ENCODE measurements at regions of chr7 and their contacts with region 1.

Region 1: DNA sequence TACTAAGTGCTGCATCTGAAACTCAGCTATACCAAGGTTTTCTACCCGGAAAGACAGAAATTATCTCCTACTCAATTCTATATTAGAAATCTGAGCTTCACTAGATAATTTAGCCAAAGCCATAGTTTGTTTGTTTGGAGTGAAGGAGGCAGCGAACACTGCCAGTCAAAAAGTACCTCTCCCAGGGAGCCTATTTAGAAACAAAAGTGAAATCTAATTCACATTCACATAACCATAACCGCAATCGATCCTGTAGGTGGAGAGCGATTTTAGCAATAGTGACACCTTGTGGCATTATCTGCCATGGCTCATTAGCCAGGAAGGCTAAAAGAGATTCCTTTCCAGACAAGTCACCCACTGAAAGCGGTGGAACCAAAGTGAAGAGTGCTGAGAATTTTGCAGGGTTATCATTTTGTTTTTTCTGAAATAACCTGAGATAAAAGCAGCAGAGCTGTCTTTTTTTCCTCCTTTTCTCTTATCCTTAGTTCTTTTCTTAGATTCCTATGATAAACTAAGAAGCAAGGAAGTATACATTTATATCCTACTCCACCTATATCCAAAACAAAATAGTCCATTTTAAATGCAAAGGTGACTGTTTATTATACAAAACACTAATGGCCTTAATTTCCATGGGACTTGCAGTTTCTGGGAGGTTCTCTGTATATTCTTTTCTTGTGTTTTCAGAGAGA is 83.7 kb upstream of the BET1 start:
- DNase-seq: peak; percentile 63
- H3K4me3 Mint-ChIP-seq: peak overlapping the region; percentile 33
- H3K27ac Mint-ChIP-seq: no peak overlapping the region
- H3K4me1 Mint-ChIP-seq: peaks cover 6% of the 10 kb centered on the region
- H3K27me3 Mint-ChIP-seq: peaks cover 18% of the 10 kb centered on the region

Region 2: GRCh38 chr7:93245525-93246432 is 842.0 kb before region 1 on chr7:
- CTCF ChIA-PET with region 1: interaction called, 5 read pairs
- POLR2A ChIA-PET with region 1: no interaction called
- intact Hi-C with region 1: loop called (anchors 1 kb)
- DNase-seq: no peak
- H3K4me3 Mint-ChIP-seq: no peak overlapping the region
- H3K27ac Mint-ChIP-seq: no peak overlapping the region
- H3K4me1 Mint-ChIP-seq: peaks cover 12% of the 10 kb centered on the region
- H3K27me3 Mint-ChIP-seq: no peaks in the 10 kb centered on the region

Region 3: GRCh38 chr7:93442478-93443224 is 645.2 kb before region 1 on chr7:
- CTCF ChIA-PET with region 1: interaction called, 3 read pairs
- POLR2A ChIA-PET with region 1: no interaction called
- intact Hi-C with region 1: loop called (anchors 5 kb)
- DNase-seq: peak; percentile 42
- H3K4me3 Mint-ChIP-seq: no peak overlapping the region
- H3K27ac Mint-ChIP-seq: no peak overlapping the region
- H3K4me1 Mint-ChIP-seq: no peaks in the 10 kb centered on the region
- H3K27me3 Mint-ChIP-seq: no peaks in the 10 kb centered on the region

Region 4: GRCh38 chr7:93715234-93715633 is 372.6 kb before region 1 on chr7:
- CTCF ChIA-PET with region 1: no interaction called
- POLR2A ChIA-PET with region 1: no interaction called
- intact Hi-C with region 1: loop called (anchors 1 kb)
- DNase-seq: peak; percentile 35
- H3K4me3 Mint-ChIP-seq: no peak overlapping the region
- H3K27ac Mint-ChIP-seq: no peak overlapping the region
- H3K4me1 Mint-ChIP-seq: no peaks in the 10 kb centered on the region
- H3K27me3 Mint-ChIP-seq: no peaks in the 10 kb centered on the region

Region 5: DNA sequence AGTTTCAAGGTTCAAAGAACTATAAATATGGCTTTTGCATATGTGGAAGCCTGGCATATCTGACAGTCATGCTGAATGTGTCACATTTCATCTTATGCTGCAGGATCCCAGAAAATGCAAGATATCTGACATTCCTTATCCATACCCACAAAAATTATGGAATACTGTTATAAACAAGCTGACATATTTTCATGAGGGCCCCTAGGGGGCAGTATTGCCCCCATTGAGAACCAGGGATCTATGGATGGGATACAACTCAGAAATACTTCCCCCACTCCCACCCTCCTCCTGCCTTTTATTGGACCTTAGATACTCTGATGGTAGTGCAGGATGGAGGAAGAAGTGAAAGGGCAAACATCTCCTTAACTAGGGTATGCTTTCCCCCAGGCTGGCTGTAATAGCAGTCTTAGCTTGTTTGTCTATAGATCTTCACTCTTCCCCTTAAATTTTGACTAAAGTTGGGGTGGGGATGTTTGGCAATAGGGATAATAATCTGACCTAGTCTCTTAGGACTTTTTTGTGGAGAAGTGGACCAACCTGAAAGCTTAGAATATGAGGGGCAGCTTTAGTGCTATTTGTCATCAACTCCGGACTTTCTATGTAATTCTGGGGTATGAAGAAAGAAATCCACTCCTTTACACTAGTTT is 184.9 kb before region 1 on chr7:
- CTCF ChIA-PET with region 1: interaction called, 13 read pairs
- POLR2A ChIA-PET with region 1: no interaction called
- intact Hi-C with region 1: loop called (anchors 1 kb)
- DNase-seq: no peak
- H3K4me3 Mint-ChIP-seq: no peak overlapping the region
- H3K27ac Mint-ChIP-seq: no peak overlapping the region
- H3K4me1 Mint-ChIP-seq: no peaks in the 10 kb centered on the region
- H3K27me3 Mint-ChIP-seq: peaks cover 7% of the 10 kb centered on the region

Region 6: DNA sequence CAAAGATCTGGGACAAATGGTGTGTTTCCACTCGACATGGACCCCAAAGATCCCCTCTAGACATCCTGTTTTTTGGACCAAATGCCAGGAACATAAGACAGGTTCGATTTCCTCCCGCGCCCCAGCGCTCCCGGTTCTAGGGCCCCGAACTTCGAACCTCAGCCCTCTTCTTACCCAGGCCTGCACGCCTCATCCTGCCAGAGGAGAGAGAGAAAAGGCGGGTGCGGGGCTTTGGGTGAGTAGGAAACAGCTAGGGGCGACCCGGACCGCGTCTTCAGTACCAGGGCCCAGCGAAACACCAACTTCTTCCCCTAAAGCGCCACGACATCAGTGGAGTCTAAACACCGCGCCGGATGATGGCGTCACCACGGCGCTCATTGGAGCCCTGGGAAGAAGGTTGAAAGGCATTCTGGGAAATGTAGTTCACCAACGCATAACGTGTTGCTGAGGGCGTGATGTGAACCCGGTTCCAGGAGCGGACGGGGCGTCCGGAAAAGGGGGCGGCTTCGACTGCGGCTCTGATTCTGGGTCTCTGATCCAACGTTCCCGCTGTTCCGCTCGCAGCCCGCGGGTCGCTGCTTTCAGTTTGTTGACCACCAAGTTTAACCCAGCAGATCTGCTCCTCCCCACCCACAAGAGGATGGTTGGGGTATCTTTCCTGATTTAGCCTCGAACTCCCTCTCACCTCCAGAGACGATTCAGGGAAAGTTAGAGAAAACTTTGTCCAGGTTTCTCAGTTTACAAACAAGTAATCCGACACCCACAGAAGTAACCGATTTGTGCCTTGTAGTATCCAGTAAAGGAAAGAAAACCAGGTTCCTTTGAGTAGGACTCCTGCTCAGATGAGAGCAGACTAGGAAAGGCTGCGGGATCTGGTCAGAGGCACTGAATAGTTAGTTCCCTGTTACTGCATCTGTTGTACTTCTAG is 83.5 kb before region 1 on chr7 and contains the start of gene BET1:
- CTCF ChIA-PET with region 1: interaction called, 3 read pairs
- POLR2A ChIA-PET with region 1: interaction called, 3 read pairs
- intact Hi-C with region 1: loop called (anchors 2 kb)
- DNase-seq: peak; percentile 94
- H3K4me3 Mint-ChIP-seq: peak within 1 kb of the TSS; percentile 95
- H3K27ac Mint-ChIP-seq: peak within 1 kb of the TSS; percentile 92
- H3K4me1 Mint-ChIP-seq: peaks cover 37% of the 10 kb centered on the region
- H3K27me3 Mint-ChIP-seq: peaks cover 8% of the 10 kb centered on the region
- total RNA-seq, gene BET1: 19.3 to 20.5 TPM

Region 7: DNA sequence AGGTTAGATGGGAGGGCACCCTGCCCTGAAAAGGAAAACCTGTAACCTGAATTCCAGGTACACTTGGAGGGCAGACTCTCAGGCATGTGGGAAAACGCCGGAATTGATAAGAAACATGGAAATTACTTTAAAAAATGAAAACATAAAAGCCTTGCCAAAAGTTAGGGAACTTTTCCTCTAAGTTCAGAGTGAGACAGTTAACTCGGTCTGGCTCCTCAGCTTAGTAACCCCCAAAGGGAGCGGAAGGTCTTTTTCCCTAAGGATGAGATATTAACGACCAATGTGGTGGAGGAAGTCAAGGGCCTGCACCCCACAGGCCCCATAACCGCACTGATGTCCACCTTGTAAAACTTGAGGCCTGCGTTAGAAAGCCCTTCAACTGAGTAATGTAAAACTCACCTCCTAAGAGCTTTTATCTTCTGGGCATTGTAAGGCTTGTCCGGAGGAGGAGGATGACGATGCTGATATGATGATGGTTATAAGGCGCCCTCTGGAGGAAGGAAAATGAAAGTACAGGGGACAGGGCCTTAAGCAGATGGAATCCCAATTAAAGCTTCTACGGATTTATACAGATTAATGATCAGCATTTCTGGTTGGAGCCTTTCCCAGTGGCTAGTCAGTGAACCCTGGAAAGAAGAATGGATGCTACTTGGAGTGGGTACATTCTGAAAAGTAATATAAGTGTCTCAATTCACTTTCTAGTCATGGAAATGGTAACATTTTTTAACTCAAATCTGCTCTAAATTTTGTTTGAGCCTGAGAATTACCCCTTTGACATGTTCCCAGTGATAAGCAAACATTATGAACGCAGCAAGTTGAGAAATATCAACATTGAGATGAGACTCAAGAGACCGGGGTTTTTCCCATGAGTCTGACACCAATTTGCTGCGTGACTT is 307.6 kb after region 1 on chr7:
- CTCF ChIA-PET with region 1: no interaction called
- POLR2A ChIA-PET with region 1: no interaction called
- intact Hi-C with region 1: loop called (anchors 10 kb)
- DNase-seq: peak; percentile 32
- H3K4me3 Mint-ChIP-seq: no peak overlapping the region
- H3K27ac Mint-ChIP-seq: no peak overlapping the region
- H3K4me1 Mint-ChIP-seq: peaks cover 6% of the 10 kb centered on the region
- H3K27me3 Mint-ChIP-seq: peaks cover 39% of the 10 kb centered on the region